ENCODE measurements at regions of chr20 and their contacts with region 1.

Region 1: GRCh38 chr20:62642040-62642665 is at the start of gene SLCO4A1:
- DNase-seq: no peak
- ATAC-seq: peak; percentile 86
- H3K4me3 ChIP-seq: peak within 1 kb of the TSS; percentile 68
- H3K27ac ChIP-seq: peak within 1 kb of the TSS; percentile 46
- H3K4me1 ChIP-seq: peaks cover 34% of the 10 kb centered on the region
- H3K27me3 ChIP-seq: peaks cover 0 to 3% of the 10 kb centered on the region in 2 experiments; a peak in 1 of 4 replicates
- CTCF ChIP-seq: no peak
- EP300 ChIP-seq: no peak
- POLR2A ChIP-seq: peak; percentile 81
- RAD21 ChIP-seq: no peak
- polyA plus RNA-seq, gene SLCO4A1: 2.1 to 4.7 TPM

Region 2: GRCh38 chr20:62623488-62624324 is 18.4 kb before region 1 on chr20:
- CTCF ChIA-PET with region 1: interaction called, 7 read pairs
- POLR2A ChIA-PET with region 1: interaction called, 19 read pairs
- RAD21 ChIA-PET with region 1: interaction called, 15 read pairs
- SMC1A ChIA-PET with region 1: interaction called, 5 read pairs
- in situ Hi-C with region 1: no loop called
- intact Hi-C with region 1: no loop called
- DNase-seq: peak; percentile 71
- ATAC-seq: peak; percentile 95
- H3K4me3 ChIP-seq: peak overlapping the region; percentile 38; the same call in 1 of the 2 replicates
- H3K27ac ChIP-seq: peak overlapping the region; percentile 82
- H3K4me1 ChIP-seq: peaks cover 37% of the 10 kb centered on the region
- H3K27me3 ChIP-seq: no peaks in the 10 kb centered on the region
- CTCF ChIP-seq: no peak
- EP300 ChIP-seq: no peak
- POLR2A ChIP-seq: peak; percentile 71
- RAD21 ChIP-seq: no peak

Region 3: GRCh38 chr20:62652051-62652926 is 10.1 kb after region 1 on chr20:
- CTCF ChIA-PET with region 1: interaction called, 16 read pairs
- POLR2A ChIA-PET with region 1: interaction called, 23 read pairs
- RAD21 ChIA-PET with region 1: interaction called, 22 read pairs
- SMC1A ChIA-PET with region 1: interaction called, 20 read pairs
- in situ Hi-C with region 1: no loop called
- intact Hi-C with region 1: loop called (anchors 1 kb)
- DNase-seq: peak; percentile 85
- ATAC-seq: peak; percentile 84
- H3K4me3 ChIP-seq: peak overlapping the region; percentile 69
- H3K27ac ChIP-seq: peak overlapping the region; percentile 98
- H3K4me1 ChIP-seq: peaks cover 40% of the 10 kb centered on the region
- H3K27me3 ChIP-seq: no peaks in the 10 kb centered on the region
- CTCF ChIP-seq: no peak
- EP300 ChIP-seq: peak; percentile 81 to 88; a peak in 3 of 4 replicates
- POLR2A ChIP-seq: peak; percentile 77
- RAD21 ChIP-seq: no peak